Mammary epithelial cell (primary cell): ENCODE measurements at regions of chr3 and their contacts with region 1.

Region 1: DNA sequence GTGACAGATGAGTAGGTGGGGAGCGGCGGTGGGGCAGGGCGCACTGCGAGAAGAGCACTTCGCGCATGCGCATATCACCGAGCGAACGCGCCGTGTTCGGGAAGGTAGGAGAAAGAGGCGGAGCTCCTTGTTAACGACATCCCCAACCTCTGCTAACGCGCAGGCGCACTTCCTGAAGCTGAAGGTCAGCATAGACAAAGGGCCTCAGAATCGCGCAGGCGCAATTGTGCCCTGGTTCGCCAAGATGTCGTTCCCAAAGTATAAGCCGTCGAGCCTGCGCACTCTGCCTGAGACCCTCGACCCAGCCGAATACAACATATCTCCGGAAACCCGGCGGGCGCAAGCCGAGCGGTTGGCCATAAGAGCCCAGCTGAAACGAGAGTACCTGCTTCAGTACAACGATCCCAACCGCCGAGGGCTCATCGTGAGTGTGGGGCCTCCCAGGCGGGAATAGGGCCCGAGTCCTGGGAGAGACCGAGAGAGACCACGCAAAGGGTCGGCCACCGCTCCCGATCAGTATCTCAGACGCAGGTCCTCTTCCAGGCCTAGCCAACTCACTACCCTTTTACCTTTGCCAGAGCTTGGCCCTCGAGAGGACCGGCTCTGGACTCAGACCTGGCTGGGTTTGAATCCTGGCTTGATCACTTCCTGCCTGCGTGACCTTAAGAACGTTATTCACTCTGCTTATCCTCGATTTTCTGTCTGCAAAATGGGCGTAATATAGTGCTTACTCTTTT is at the start of gene NDUFB4:
- DNase-seq: peak; percentile 96
- H3K4me3 ChIP-seq: peak within 1 kb of the TSS; percentile 70 to 77 (median 71)
- H3K27ac ChIP-seq: peak within 1 kb of the TSS; percentile 81
- H3K4me1 ChIP-seq: no peaks in the 10 kb centered on the region
- H3K27me3 ChIP-seq: no peaks in the 10 kb centered on the region
- CTCF ChIP-seq: no peak
- total RNA-seq, gene NDUFB4: 31.5 to 99.0 TPM

Region 2: GRCh38 chr3:120506828-120507774 is 89.2 kb before region 1 on chr3:
- CTCF ChIA-PET with region 1: no interaction called
- dilution Hi-C with region 1: no loop called
- in situ Hi-C with region 1: no loop called
- intact Hi-C with region 1: no loop called
- DNase-seq: no peak
- H3K4me3 ChIP-seq: no peak overlapping the region
- H3K27ac ChIP-seq: no peak overlapping the region
- H3K4me1 ChIP-seq: no peaks in the 10 kb centered on the region
- H3K27me3 ChIP-seq: no peaks in the 10 kb centered on the region
- CTCF ChIP-seq: peak; percentile 67 to 80

Region 3: DNA sequence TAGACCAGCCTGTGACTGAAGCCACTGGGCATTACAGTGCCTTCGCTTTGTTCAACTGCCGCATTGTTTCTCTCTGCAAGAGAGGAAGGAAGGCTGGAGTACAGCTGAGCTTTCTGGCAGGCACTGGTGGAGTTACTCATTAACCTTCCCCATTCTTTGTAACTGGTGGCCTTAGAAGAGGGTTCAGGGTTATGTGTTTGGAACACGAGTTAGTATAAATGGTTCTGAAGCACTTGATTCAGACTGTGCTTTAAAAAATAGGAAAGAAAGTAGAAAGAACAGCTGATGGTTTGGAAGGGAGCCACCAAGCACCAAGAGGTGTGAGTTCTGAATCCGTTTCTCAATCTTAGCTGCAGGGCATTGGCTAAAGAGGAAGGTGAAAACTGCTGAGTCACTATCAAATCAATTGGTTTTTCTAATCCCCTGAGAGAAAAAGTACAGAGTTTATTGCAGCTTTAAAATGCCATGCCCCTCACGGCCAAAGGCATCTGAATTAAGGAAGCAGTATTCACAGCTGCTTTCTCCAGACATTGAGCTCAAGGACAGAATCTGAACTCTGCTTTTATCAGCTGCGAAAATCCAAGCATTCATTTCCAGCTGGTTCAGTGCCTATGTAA is 82.2 kb after region 1 on chr3:
- CTCF ChIA-PET with region 1: no interaction called
- dilution Hi-C with region 1: no loop called
- in situ Hi-C with region 1: no loop called
- intact Hi-C with region 1: no loop called
- DNase-seq: peak; percentile 68
- H3K4me3 ChIP-seq: no peak overlapping the region
- H3K27ac ChIP-seq: no peak overlapping the region
- H3K4me1 ChIP-seq: peaks cover 10% of the 10 kb centered on the region
- H3K27me3 ChIP-seq: no peaks in the 10 kb centered on the region
- CTCF ChIP-seq: no peak

Region 4: GRCh38 chr3:120742198-120742849 is 146.0 kb after region 1 on chr3 and contains the starts of genes GTF2E1 and RABL3:
- CTCF ChIA-PET with region 1: no interaction called
- dilution Hi-C with region 1: no loop called
- in situ Hi-C with region 1: no loop called
- intact Hi-C with region 1: loop called (anchors 1 kb)
- DNase-seq: peak; percentile 99
- H3K4me3 ChIP-seq: peak within 1 kb of the TSS; percentile 86 to 97 (median 86)
- H3K27ac ChIP-seq: peak within 1 kb of the TSS; percentile 99
- H3K4me1 ChIP-seq: peaks cover 6% of the 10 kb centered on the region
- H3K27me3 ChIP-seq: no peaks in the 10 kb centered on the region
- CTCF ChIP-seq: no peak
- total RNA-seq, gene GTF2E1: 14.7 to 16.5 TPM
- total RNA-seq, gene RABL3: 14.5 to 21.4 TPM

Region 5: DNA sequence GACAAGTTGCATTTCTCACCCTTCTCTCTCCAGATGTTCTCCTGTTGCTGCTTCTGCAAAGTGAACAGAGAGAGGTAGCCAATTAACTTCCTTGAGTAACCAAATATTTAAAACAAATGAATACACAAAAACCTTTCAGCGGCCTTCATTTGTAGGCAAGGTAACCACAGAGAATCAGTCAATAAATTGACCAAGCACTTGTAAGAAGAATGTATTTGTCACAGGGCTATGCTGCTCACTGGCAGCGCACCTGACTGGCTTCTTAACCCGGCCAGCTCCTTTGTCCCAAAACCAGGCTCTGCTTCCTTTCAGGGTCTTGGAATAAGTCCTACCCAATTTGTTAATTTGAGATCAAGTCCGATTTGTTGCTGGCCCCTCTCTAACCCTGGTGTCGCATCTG is 268.3 kb after region 1 on chr3:
- CTCF ChIA-PET with region 1: no interaction called
- dilution Hi-C with region 1: no loop called
- in situ Hi-C with region 1: no loop called
- intact Hi-C with region 1: no loop called
- DNase-seq: no peak
- H3K4me3 ChIP-seq: no peak overlapping the region
- H3K27ac ChIP-seq: no peak overlapping the region
- H3K4me1 ChIP-seq: no peaks in the 10 kb centered on the region
- H3K27me3 ChIP-seq: peaks cover 6% of the 10 kb centered on the region
- CTCF ChIP-seq: no peak